Dorsolateral prefrontal cortex (tissue), 120 donors: ENCODE measurements at regions of chr16 and their contacts with region 1.

Region 1: GRCh38 chr16:58661199-58661830 is 23.3 kb downstream of the SLC38A7 start:
- DNase-seq: peak in 5 of 10 donors; percentile 30 to 54 (median 39)
- H3K4me3 ChIP-seq: no peak overlapping the region
- H3K27ac ChIP-seq: no peak overlapping the region
- H3K27me3 ChIP-seq: no peaks in the 10 kb centered on the region
- CTCF ChIP-seq: peak in 54 of 56 donors; percentile 15 to 77 (median 60)

Region 2: GRCh38 chr16:58336332-58337089 is 324.8 kb before region 1 on chr16:
- intact Hi-C with region 1: loop called (anchors 5 to 10 kb)
- DNase-seq: peak; percentile 70 to 92 (median 86)
- H3K4me3 ChIP-seq: peak overlapping the region; percentile 6 to 65 (median 44)
- H3K27ac ChIP-seq: peak overlapping the region in 1 of 59 donors; percentile 4
- H3K27me3 ChIP-seq: no peaks in the 10 kb centered on the region
- CTCF ChIP-seq: peak; percentile 90 to 100 (median 96)